ENCODE measurements at regions of chr16 and their contacts with region 1.

Region 1: GRCh38 chr16:67733734-67734470 is 14.8 kb upstream of the GFOD2 start:
- DNase-seq: no peak
- ATAC-seq: no peak
- H3K4me3 ChIP-seq: no peak overlapping the region
- H3K27ac ChIP-seq: no peak overlapping the region
- H3K4me1 ChIP-seq: no peaks in the 10 kb centered on the region
- H3K27me3 ChIP-seq: no peaks in the 10 kb centered on the region
- CTCF ChIP-seq: no peak
- EP300 ChIP-seq: no peak
- POLR2A ChIP-seq: no peak
- RAD21 ChIP-seq: no peak

Region 2: GRCh38 chr16:67713647-67714273 is 20.1 kb before region 1 on chr16:
- CTCF ChIA-PET with region 1: no interaction called
- POLR2A ChIA-PET with region 1: interaction called, 8 read pairs
- RAD21 ChIA-PET with region 1: interaction called, 3 read pairs
- SMC1A ChIA-PET with region 1: no interaction called
- in situ Hi-C with region 1: no loop called
- intact Hi-C with region 1: loop called (anchors 1 kb)
- DNase-seq: no peak
- ATAC-seq: peak; percentile 68
- H3K4me3 ChIP-seq: no peak overlapping the region
- H3K27ac ChIP-seq: no peak overlapping the region
- H3K4me1 ChIP-seq: peaks cover 17% of the 10 kb centered on the region
- H3K27me3 ChIP-seq: no peaks in the 10 kb centered on the region
- CTCF ChIP-seq: no peak
- EP300 ChIP-seq: no peak
- POLR2A ChIP-seq: no peak
- RAD21 ChIP-seq: no peak

Region 3: DNA sequence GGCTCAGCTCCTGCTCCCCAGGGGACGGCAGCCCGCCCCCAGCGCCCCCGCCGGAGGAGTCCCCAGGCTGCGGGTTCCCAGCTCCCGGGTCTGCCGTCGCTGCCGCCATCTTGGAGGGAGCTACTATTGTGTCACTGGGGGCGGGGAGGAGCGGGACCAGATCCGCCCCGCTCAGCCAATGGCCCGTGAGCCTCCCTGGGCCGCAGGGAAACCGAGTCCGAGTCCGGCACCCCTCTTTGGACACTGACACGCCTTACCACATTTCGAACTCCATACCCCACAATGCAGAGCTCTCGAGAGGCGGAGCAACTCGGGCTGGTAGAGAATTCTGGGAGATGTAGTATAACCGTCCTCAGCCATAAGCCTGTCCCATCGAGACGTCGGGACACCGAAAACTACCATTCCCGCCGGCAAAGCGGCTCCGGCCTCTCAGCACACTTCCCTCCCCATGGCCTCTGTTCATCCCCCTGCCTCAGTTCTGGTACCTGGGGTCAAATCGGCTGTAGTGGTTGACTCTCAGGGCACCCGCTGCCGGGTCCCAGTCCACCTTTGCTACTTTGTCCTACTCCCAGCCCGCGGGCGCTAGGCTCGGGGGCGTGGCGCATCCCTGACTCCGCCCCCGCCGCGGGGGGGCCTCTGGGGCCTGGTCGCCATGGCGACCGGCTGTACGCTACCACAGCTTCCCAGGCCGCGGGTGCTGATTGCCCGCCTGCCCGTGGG is 72.7 kb after region 1 on chr16 and contains the starts of genes RANBP10 and TSNAXIP1:
- CTCF ChIA-PET with region 1: no interaction called
- POLR2A ChIA-PET with region 1: no interaction called
- RAD21 ChIA-PET with region 1: no interaction called
- SMC1A ChIA-PET with region 1: no interaction called
- in situ Hi-C with region 1: no loop called
- intact Hi-C with region 1: no loop called
- DNase-seq: peak; percentile 99
- ATAC-seq: peak; percentile 93
- H3K4me3 ChIP-seq: peak within 1 kb of the TSS; percentile 94
- H3K27ac ChIP-seq: peak within 1 kb of the TSS; percentile 75
- H3K4me1 ChIP-seq: peaks cover 22% of the 10 kb centered on the region
- H3K27me3 ChIP-seq: no peaks in the 10 kb centered on the region
- CTCF ChIP-seq: no peak
- EP300 ChIP-seq: no peak
- POLR2A ChIP-seq: peak; percentile 92
- RAD21 ChIP-seq: no peak
- polyA plus RNA-seq, gene RANBP10: 1.2 to 2.0 TPM
- polyA plus RNA-seq, gene TSNAXIP1: 0.09 TPM in 1 of 2 experiments, not detected in the other

Measured in GM12878 (cell line).